Heart right ventricle (tissue), 16 donors: ENCODE measurements at regions of chr19 and their contacts with region 1.

Region 1: GRCh38 chr19:19900729-19901444 is at the start of gene ZNF93:
- DNase-seq: peak; percentile 88 to 97
- ATAC-seq: peak; percentile 98 to 99 (median 99)
- H3K4me3 ChIP-seq: peak within 1 kb of the TSS; percentile 43 to 80 (median 72)
- H3K27ac ChIP-seq: peak within 1 kb of the TSS; percentile 22 to 84 (median 70)
- H3K4me1 ChIP-seq: peaks cover 0 to 16% (median 6%) of the 10 kb centered on the region in 9 donors
- H3K27me3 ChIP-seq: no peaks in the 10 kb centered on the region
- CTCF ChIP-seq: no peak
- total RNA-seq, gene ZNF93: 1.1 to 3.3 (median 1.9) TPM

Region 2: DNA sequence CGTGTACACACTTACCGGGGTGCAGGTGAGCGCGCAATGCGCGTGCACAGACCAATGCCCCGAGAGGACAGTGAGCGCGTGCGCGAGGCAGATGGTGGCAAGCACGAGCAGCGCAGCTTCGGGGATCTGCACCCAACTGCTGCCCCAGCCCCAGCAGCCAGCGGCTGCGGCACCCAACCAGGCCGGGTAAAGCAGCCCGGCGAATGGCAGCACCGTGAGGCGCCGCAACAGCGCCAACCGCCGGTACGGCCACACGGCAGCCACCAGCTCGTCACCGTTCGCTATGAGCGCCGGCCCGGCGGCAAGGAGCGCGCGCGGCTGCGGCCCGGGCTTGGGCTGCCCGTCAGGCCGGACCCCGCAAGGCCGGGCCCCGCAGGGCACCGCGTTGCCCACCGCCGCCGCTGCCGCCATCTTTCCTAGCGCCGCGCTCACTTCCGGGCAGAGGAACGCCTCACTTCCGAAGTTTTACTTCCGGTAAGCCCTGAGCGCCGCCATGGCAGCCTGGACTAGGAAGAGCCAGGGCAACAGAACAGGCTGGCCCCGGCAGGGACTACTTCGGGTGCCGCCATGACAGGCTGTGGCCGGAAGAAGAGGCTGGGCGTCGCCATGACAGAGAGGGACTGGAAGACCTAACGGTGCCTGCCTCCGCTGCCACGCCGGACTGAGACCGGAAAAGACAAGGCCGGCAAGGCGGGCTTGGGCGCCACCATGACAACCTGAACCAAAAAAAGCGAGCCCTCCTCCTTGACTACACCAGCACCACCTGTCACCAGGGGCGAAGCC is 237.4 kb before region 1 on chr19 and contains the start of gene ATP13A1:
- intact Hi-C with region 1: loop called in 1 of 10 experiments (anchors 10 kb)
- DNase-seq: peak; percentile 95 to 97
- ATAC-seq: peak; percentile 97 to 98 (median 98)
- H3K4me3 ChIP-seq: peak within 1 kb of the TSS; percentile 77 to 100 (median 93)
- H3K27ac ChIP-seq: peak within 1 kb of the TSS; percentile 86 to 98 (median 92)
- H3K4me1 ChIP-seq: peaks cover 5 to 38% (median 20%) of the 10 kb centered on the region in 9 donors
- H3K27me3 ChIP-seq: no peaks in the 10 kb centered on the region
- CTCF ChIP-seq: peak in 4 of 9 donors; percentile 9 to 42 (median 16)
- total RNA-seq, gene ATP13A1: 12.3 to 28.2 (median 18.4) TPM

Region 3: GRCh38 chr19:19732579-19733501 is 168.0 kb before region 1 on chr19 and contains the start of gene ZNF14:
- intact Hi-C with region 1: loop called in 1 of 10 experiments (anchors 2 kb)
- DNase-seq: peak; percentile 90 to 96
- ATAC-seq: peak; percentile 100
- H3K4me3 ChIP-seq: peak within 1 kb of the TSS; percentile 64 to 95 (median 86)
- H3K27ac ChIP-seq: peak within 1 kb of the TSS in 9 of 10 donors; percentile 61 to 87 (median 72)
- H3K4me1 ChIP-seq: peaks cover 0 to 20% (median 11%) of the 10 kb centered on the region in 9 donors
- H3K27me3 ChIP-seq: no peaks in the 10 kb centered on the region
- CTCF ChIP-seq: peak in 5 of 9 donors; percentile 16 to 42 (median 33)
- total RNA-seq, gene ZNF14: 2.8 to 6.6 (median 4.1) TPM

Region 4: DNA sequence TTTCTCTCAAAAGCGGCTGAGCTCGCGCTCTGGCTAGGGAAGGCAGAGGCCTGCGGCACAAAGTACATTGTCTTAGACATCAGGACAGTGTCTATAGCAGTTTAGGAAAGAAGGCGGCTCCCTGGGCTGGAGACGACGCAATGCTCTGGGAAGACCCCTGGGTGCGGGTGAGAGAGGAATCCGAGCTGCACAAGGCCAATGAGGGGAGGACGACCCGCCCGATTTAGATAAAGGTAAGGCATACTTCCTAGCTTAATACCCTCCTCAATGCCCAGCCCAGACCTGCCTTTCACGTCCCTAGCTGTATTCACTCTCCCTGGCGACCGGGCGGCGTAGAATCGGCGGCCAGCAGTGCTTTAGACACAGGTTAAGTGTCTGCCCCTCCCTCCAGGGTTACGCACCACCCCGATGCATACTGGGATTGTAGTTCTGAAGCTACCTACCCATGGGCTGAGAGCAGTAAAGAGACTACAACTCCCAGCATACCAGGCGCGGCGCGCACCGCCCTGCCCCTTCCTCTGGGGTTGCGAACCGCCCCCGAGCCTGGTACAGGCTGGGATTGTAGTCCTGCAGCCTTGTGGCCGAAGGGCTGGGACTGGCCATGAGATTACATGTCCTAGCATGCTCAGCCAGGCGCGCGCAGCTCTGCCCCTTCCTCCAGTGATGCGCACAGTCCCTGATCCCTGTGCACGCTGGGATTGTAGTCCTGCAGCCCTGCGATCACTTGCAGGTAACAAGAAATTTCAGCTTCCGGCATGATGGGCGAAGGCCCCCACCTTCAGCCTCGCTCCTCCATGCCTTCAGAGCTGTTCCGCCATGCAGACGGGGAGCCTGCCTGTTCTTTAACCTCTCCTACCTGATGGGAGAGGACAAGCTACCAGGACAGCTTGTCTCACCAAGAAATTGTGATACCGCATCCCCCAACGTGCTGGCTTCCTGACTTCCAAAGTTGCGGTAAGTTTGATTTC is 124.6 kb before region 1 on chr19:
- intact Hi-C with region 1: loop called in 1 of 10 experiments (anchors 5 kb)
- DNase-seq: peak; percentile 96 to 98
- ATAC-seq: peak; percentile 100
- H3K4me3 ChIP-seq: peak overlapping the region; percentile 43 to 87 (median 76)
- H3K27ac ChIP-seq: peak overlapping the region in 9 of 10 donors; percentile 35 to 87 (median 75)
- H3K4me1 ChIP-seq: peaks cover 7 to 29% (median 20%) of the 10 kb centered on the region in 9 donors
- H3K27me3 ChIP-seq: no peaks in the 10 kb centered on the region
- CTCF ChIP-seq: peak in 4 of 9 donors; percentile 12 to 35 (median 18)

Region 5: GRCh38 chr19:19865739-19866481 is 35.0 kb before region 1 on chr19 and contains the start of gene ZNF253:
- intact Hi-C with region 1: loop called in 3 of 10 experiments (anchors 5 kb)
- DNase-seq: peak; percentile 96 to 99
- ATAC-seq: peak; percentile 99 to 100 (median 99)
- H3K4me3 ChIP-seq: peak within 1 kb of the TSS; percentile 58 to 90 (median 72)
- H3K27ac ChIP-seq: peak within 1 kb of the TSS; percentile 85 to 98 (median 92)
- H3K4me1 ChIP-seq: peaks cover 0 to 49% (median 31%) of the 10 kb centered on the region in 9 donors
- H3K27me3 ChIP-seq: peaks cover 0 to 3% (median 2%) of the 10 kb centered on the region in 7 donors
- CTCF ChIP-seq: no peak
- total RNA-seq, gene ZNF253: 4.8 to 13.0 (median 9.2) TPM